Mammary epithelial cell (primary cell): ENCODE measurements at regions of chr4 and their contacts with region 1.

Region 1: DNA sequence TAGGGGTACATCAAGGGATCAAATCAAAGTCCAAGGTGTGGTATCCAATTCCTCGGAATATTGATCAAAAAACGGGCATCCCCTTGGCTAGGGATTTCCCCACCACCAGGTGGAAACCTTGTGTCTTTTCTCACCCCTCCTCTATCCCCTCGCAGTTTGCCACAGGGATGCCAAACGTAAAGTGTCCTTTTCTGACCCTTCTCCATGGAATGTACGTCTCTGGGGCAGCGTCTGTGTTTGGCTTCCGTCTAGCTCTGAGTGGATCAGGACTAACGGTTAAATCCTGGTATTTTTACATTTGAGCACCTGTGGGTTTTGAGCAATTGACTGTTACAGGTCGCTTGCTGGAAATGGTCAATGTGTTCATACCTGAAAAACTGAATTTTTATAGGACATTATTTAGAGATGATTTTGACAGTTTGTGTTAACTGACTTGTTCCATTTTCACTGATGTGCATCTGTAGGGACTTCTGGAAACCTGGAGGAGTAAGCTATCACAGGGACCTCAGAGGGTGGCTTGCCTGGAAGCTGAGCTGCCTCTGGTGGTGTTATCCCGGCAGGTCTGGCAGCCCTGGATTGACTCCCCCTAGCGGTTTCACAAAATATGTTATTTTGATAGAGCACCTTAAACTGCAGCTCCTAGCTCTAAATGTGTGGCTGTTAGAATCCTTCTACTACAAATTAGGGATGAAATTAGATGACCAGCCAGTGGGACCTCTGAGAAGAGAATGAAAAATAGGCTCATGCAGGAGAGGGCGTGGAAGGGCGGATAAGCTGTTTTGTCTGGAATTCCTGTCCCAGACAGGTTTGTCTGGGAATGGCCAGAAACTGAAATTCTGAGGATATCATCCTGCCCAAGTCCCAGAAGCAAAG is 8.8 kb upstream of the MGST2 start:
- DNase-seq: peak; percentile 73
- H3K4me3 ChIP-seq: peak overlapping the region in 1 of 3 experiments; percentile 14
- H3K27ac ChIP-seq: peak overlapping the region; percentile 75
- H3K4me1 ChIP-seq: peaks cover 28% of the 10 kb centered on the region
- H3K27me3 ChIP-seq: no peaks in the 10 kb centered on the region
- CTCF ChIP-seq: peak; percentile 94 to 96

Region 2: DNA sequence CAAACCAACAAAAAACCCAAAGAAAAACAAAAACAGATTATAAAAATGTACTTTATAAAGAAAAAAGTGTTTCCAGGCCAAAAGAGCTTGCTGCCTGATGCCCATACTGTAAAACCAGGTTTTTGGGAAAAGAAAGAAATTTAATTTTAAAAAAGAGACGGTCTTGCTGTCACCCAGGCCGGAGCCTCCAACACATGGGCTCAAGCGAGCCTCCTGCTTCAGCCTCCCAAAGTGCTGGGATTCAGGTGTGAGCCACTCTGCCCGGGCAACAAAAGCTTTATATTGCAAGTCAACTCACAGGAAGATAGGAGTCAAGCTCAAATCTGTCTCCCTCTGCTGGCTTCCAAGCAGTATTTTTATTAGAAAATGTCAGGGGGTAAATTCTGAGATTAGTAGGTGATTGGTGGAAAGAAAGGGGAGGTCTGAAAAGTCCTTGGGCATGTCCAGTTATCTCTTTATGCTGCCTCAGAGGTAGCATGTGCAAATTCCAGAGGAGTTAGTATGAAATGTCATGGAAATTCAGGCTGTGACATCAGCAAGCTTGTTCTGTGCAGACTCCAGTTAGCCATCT is 48.1 kb after region 1 on chr4:
- CTCF ChIA-PET with region 1: interaction called, 3 read pairs
- dilution Hi-C with region 1: no loop called
- in situ Hi-C with region 1: no loop called
- intact Hi-C with region 1: loop called (anchors 2 kb)
- DNase-seq: no peak
- H3K4me3 ChIP-seq: no peak overlapping the region
- H3K27ac ChIP-seq: no peak overlapping the region
- H3K4me1 ChIP-seq: no peaks in the 10 kb centered on the region
- H3K27me3 ChIP-seq: no peaks in the 10 kb centered on the region
- CTCF ChIP-seq: peak in 1 of 2 donors; percentile 37

Region 3: DNA sequence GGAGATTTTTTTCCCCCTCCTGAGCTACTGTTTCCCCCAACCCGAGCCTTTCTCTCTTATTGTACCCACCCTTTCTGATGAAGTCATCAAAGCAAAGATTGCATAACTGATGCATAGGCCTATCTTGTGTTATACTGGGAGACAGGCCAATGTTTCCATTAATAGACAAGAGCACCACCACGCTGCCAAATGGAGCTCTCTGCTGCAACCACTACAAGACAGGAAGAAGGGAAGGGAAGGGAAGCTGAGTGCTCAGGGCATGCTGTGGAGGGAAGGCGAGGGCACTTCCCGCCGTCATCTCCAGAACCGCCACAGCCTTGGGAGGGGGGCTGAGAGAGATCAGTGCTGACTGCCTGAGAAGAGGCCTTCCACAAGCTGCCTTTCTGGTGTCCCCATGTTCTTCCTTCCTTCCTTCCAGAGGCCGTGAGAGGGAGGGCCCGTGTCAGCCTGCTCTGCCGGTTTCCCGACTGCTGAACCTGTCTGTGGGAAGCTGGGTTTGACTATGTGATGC is 83.7 kb after region 1 on chr4:
- CTCF ChIA-PET with region 1: interaction called, 20 read pairs
- dilution Hi-C with region 1: no loop called
- in situ Hi-C with region 1: no loop called
- intact Hi-C with region 1: loop called (anchors 1 kb)
- DNase-seq: peak; percentile 59
- H3K4me3 ChIP-seq: no peak overlapping the region
- H3K27ac ChIP-seq: no peak overlapping the region
- H3K4me1 ChIP-seq: no peaks in the 10 kb centered on the region
- H3K27me3 ChIP-seq: peaks cover 7% of the 10 kb centered on the region
- CTCF ChIP-seq: peak in 1 of 2 donors; percentile 54

Region 4: DNA sequence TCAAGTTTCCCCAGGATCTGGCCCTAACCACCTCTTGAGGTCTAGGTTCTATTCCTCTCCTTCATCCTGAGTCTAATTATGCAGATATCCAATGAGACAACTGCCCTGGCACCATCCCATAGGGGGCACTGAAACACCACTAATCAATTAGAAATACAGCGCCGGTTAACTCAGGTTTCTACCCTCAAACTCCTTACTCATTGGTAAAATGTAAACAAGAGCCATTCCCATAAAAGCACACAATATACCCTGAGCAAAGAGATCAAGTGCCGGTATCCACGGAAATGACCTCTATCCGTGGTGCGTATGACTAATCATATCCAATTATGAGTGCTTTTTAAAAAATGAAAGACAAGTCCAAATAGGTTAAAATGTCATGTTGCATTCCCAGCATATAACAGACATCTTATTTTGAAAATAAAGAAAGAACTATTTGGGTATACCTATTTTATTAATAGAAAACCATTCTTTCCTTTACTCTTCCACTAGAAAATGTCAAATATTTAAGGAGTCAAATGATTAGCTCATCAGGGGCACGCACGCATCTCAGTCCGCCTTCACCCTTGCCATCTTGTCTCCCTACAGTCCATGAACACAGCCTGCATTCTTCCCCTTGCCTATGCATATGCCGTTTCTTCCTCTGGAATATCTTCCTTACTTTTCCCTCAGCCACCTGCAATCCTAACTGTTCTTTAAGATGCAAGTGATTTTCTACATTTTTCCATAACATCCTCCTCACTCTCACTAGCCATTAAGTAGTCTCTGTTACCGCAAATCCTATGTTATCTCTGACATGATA is 356.0 kb after region 1 on chr4:
- CTCF ChIA-PET with region 1: no interaction called
- dilution Hi-C with region 1: no loop called
- in situ Hi-C with region 1: no loop called
- intact Hi-C with region 1: loop called (anchors 5 kb)
- DNase-seq: peak; percentile 71
- H3K4me3 ChIP-seq: no peak overlapping the region
- H3K27ac ChIP-seq: no peak overlapping the region
- H3K4me1 ChIP-seq: no peaks in the 10 kb centered on the region
- H3K27me3 ChIP-seq: peaks cover 2% of the 10 kb centered on the region
- CTCF ChIP-seq: peak; percentile 62 to 64

Region 5: GRCh38 chr4:140316799-140317198 is 659.9 kb after region 1 on chr4:
- CTCF ChIA-PET with region 1: interaction called, 11 read pairs
- dilution Hi-C with region 1: no loop called
- in situ Hi-C with region 1: no loop called
- intact Hi-C with region 1: no loop called
- DNase-seq: no peak
- H3K4me3 ChIP-seq: no peak overlapping the region
- H3K27ac ChIP-seq: no peak overlapping the region
- H3K4me1 ChIP-seq: no peaks in the 10 kb centered on the region
- H3K27me3 ChIP-seq: no peaks in the 10 kb centered on the region
- CTCF ChIP-seq: no peak